ENCODE measurements at regions of chr14 and their contacts with region 1.

Region 1: GRCh38 chr14:39232554-39233415 is 930 bp upstream of the MIA2 start:
- DNase-seq: no peak
- ATAC-seq: peak; percentile 31; the same call in 1 of the 2 replicates
- H3K4me3 ChIP-seq: no peak overlapping the region
- H3K27ac ChIP-seq: no peak overlapping the region
- H3K4me1 ChIP-seq: no peaks in the 10 kb centered on the region
- H3K27me3 ChIP-seq: no peaks in the 10 kb centered on the region
- CTCF ChIP-seq: no peak

Region 2: GRCh38 chr14:39276005-39276404 is 43.2 kb after region 1 on chr14:
- CTCF ChIA-PET with region 1: no interaction called
- POLR2A ChIA-PET with region 1: no interaction called
- intact Hi-C with region 1: no loop called
- DNase-seq: no peak
- ATAC-seq: peak; percentile 37; the same call in 1 of the 2 replicates
- H3K4me3 ChIP-seq: no peak overlapping the region
- H3K27ac ChIP-seq: no peak overlapping the region
- H3K4me1 ChIP-seq: peaks cover 7% of the 10 kb centered on the region; the same call in 1 of the 2 replicates
- H3K27me3 ChIP-seq: no peaks in the 10 kb centered on the region
- CTCF ChIP-seq: no peak

Region 3: GRCh38 chr14:39368261-39368959 is 135.6 kb after region 1 on chr14:
- CTCF ChIA-PET with region 1: interaction called, 7 read pairs
- POLR2A ChIA-PET with region 1: no interaction called
- intact Hi-C with region 1: loop called (anchors 1 kb)
- DNase-seq: peak; percentile 78
- ATAC-seq: peak; percentile 76
- H3K4me3 ChIP-seq: no peak overlapping the region
- H3K27ac ChIP-seq: no peak overlapping the region
- H3K4me1 ChIP-seq: no peaks in the 10 kb centered on the region
- H3K27me3 ChIP-seq: no peaks in the 10 kb centered on the region
- CTCF ChIP-seq: peak; percentile 81

Measured in PC-3 (cell line).